GM12878 (cell line): ENCODE measurements at regions of chr11 and their contacts with region 1.

Region 1: DNA sequence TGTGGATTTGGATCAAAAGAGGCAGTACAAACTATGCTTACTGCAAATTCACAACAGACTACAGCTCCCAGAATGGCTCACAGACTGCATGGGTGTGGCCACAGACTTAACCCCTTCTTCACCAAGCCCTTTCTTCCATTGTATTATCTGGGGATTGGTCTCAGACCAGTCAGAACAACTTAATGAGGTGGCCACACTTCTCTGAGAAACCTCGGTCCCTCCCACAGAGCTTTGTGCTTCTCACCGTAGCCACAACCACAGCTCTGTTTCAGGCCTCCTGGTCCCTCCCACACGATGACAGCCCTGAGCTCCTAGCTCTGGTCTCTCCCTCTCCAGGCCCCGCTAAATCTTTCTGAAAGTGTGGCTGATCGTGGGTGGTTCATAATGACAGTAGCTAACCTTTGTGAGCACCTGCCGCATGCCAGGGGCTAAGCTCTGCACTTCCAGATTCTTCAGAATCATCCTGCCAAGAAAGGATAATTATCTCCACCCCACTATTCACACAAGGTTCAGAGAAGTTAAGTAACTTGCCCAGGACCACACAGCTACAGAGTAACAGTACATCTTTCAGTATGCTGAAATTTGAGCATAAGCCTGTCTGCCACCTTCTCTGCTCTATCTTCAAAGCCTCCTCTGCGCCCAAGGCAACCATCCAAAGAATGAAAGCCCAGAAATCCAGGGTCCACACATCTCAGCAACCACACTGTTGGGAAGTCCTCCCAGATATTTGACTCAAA is 5.4 kb downstream of the PDE2A start:
- DNase-seq: peak; percentile 94
- ATAC-seq: peak; percentile 97
- H3K4me3 ChIP-seq: no peak overlapping the region
- H3K27ac ChIP-seq: peak overlapping the region; percentile 53
- H3K4me1 ChIP-seq: peaks cover 25% of the 10 kb centered on the region
- H3K27me3 ChIP-seq: peaks cover 0 to under 1% of the 10 kb centered on the region in 2 experiments; a peak in 3 of 4 replicates
- CTCF ChIP-seq: no peak
- EP300 ChIP-seq: peak in 1 of 2 experiments; percentile 36; a peak in 1 of 4 replicates
- POLR2A ChIP-seq: no peak
- RAD21 ChIP-seq: no peak

Region 2: DNA sequence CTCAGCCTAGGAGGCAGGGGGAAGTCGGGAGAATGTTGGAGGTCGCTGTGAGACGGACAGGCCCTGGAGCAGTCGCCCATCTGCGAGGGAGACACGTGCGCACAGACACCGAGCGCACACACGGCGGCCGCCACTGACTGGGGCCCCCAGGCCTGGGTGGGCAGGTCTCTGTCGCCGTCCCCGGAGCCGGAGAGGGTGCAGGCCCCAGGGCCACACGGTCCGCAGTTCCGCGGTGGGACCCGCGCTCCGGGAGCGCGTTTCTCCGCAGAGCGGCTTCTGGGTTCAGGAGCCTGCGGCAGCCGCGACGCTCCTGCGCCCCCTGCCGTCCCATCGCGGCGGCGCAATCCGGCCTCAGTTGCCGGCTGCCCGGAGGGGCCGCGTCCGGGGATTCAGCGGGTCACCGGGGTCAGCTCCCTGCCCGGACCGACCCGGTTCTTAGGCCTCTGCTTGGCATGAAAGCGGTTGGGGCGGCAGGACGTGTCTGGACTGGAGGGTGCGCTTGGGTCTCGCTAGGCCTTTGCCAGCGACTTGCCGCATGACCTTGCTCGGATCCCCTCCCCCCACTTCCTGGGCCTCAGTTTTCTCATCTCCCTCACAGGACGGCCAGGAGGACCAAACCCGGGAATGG is 25.8 kb before region 1 on chr11:
- CTCF ChIA-PET with region 1: interaction called, 12 read pairs
- POLR2A ChIA-PET with region 1: interaction called, 4 read pairs
- RAD21 ChIA-PET with region 1: interaction called, 5 read pairs
- SMC1A ChIA-PET with region 1: no interaction called
- in situ Hi-C with region 1: no loop called
- intact Hi-C with region 1: no loop called
- DNase-seq: no peak
- ATAC-seq: peak; percentile 91
- H3K4me3 ChIP-seq: no peak overlapping the region
- H3K27ac ChIP-seq: no peak overlapping the region
- H3K4me1 ChIP-seq: no peaks in the 10 kb centered on the region
- H3K27me3 ChIP-seq: peaks cover 6 to 11% of the 10 kb centered on the region in 2 experiments; a peak in 3 of 4 replicates
- CTCF ChIP-seq: peak; percentile 84 to 89 (median 88)
- EP300 ChIP-seq: no peak
- POLR2A ChIP-seq: no peak
- RAD21 ChIP-seq: peak; percentile 69